CD8-positive, alpha-beta memory T cell (primary cell): ENCODE measurements at regions of chr20 and their contacts with region 1.

Region 1: GRCh38 chr20:330233-331149 is 5.1 kb downstream of the SOX12 start:
- DNase-seq: peak; percentile 35 to 78 (median 58)
- H3K4me3 ChIP-seq: no peak overlapping the region
- H3K4me3 Mint-ChIP-seq: peak overlapping the region in 1 of 7 donors; percentile 60
- H3K27ac ChIP-seq: no peak overlapping the region
- H3K27ac Mint-ChIP-seq: peak overlapping the region in 3 of 8 donors; percentile 61 to 77 (median 72)
- H3K4me1 ChIP-seq: peaks cover 20% of the 10 kb centered on the region
- H3K4me1 Mint-ChIP-seq: peaks cover 6 to 26% (median 10%) of the 10 kb centered on the region in 3 donors
- H3K27me3 ChIP-seq: no peaks in the 10 kb centered on the region
- H3K27me3 Mint-ChIP-seq: peaks cover 0 to 1% of the 10 kb centered on the region in 2 donors

Region 2: GRCh38 chr20:258963-259362 is 71.5 kb before region 1 on chr20:
- CTCF ChIA-PET with region 1: interaction called, 16 read pairs
- POLR2A ChIA-PET with region 1: no interaction called
- DNase-seq: no peak
- H3K4me3 ChIP-seq: no peak overlapping the region
- H3K4me3 Mint-ChIP-seq: no peak overlapping the region
- H3K27ac ChIP-seq: no peak overlapping the region
- H3K27ac Mint-ChIP-seq: no peak overlapping the region
- H3K4me1 ChIP-seq: no peaks in the 10 kb centered on the region
- H3K4me1 Mint-ChIP-seq: peaks cover 0 to 3% (median 0%) of the 10 kb centered on the region in 3 donors
- H3K27me3 ChIP-seq: no peaks in the 10 kb centered on the region
- H3K27me3 Mint-ChIP-seq: peaks cover 4 to 13% of the 10 kb centered on the region in 2 donors

Region 3: GRCh38 chr20:346640-347316 is 16.3 kb after region 1 on chr20 and contains the start of gene NRSN2:
- CTCF ChIA-PET with region 1: interaction called, 11 read pairs
- POLR2A ChIA-PET with region 1: no interaction called
- DNase-seq: peak in 1 of 5 donors; percentile 47
- H3K4me3 ChIP-seq: peak within 1 kb of the TSS; percentile 73
- H3K4me3 Mint-ChIP-seq: peak within 1 kb of the TSS; percentile 81 to 96 (median 89)
- H3K27ac ChIP-seq: peak within 1 kb of the TSS; percentile 54
- H3K27ac Mint-ChIP-seq: peak within 1 kb of the TSS in 7 of 8 donors; percentile 15 to 92 (median 72)
- H3K4me1 ChIP-seq: peaks cover 6% of the 10 kb centered on the region
- H3K4me1 Mint-ChIP-seq: peaks cover 11 to 14% (median 13%) of the 10 kb centered on the region in 3 donors
- H3K27me3 ChIP-seq: no peaks in the 10 kb centered on the region
- H3K27me3 Mint-ChIP-seq: peaks cover 0 to 6% of the 10 kb centered on the region in 2 donors
- total RNA-seq, gene NRSN2: 7.6 to 9.5 TPM

Region 4: GRCh38 chr20:358891-359555 is 28.5 kb after region 1 on chr20:
- CTCF ChIA-PET with region 1: no interaction called
- POLR2A ChIA-PET with region 1: no interaction called
- DNase-seq: no peak
- H3K4me3 ChIP-seq: no peak overlapping the region
- H3K4me3 Mint-ChIP-seq: no peak overlapping the region
- H3K27ac ChIP-seq: no peak overlapping the region
- H3K27ac Mint-ChIP-seq: no peak overlapping the region
- H3K4me1 ChIP-seq: peaks cover 8% of the 10 kb centered on the region
- H3K4me1 Mint-ChIP-seq: peaks cover 0 to 5% (median 3%) of the 10 kb centered on the region in 3 donors
- H3K27me3 ChIP-seq: no peaks in the 10 kb centered on the region
- H3K27me3 Mint-ChIP-seq: peaks cover 4 to 10% of the 10 kb centered on the region in 2 donors

Region 5: DNA sequence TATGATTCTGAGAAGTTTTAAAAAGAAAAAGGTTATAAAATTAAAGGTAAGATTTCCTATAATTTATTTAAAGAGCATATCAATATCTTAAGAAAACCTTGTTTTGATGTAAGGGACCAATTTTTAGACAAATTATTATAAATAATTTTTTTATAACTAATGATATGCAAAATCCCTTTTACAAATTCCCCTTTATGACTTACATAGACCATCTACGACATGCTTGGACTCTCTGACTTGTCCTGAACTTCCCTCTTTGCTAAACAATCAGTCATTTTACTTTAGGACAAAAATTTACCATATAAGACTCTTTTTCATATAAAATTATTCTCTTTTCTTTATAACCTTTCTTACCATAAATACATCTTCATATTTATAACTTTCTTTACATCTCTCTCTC is 600.9 kb after region 1 on chr20:
- CTCF ChIA-PET with region 1: no interaction called
- POLR2A ChIA-PET with region 1: no interaction called
- DNase-seq: no peak
- H3K4me3 ChIP-seq: no peak overlapping the region
- H3K4me3 Mint-ChIP-seq: no peak overlapping the region
- H3K27ac ChIP-seq: no peak overlapping the region
- H3K27ac Mint-ChIP-seq: no peak overlapping the region
- H3K4me1 ChIP-seq: no peaks in the 10 kb centered on the region
- H3K4me1 Mint-ChIP-seq: no peaks in the 10 kb centered on the region
- H3K27me3 ChIP-seq: no peaks in the 10 kb centered on the region
- H3K27me3 Mint-ChIP-seq: peaks cover 5 to 21% of the 10 kb centered on the region in 2 donors